Activated CD8-positive, alpha-beta T cell treated with anti-CD3 and anti-CD28 coated beads for 36 hours (primary cell): ENCODE measurements at regions of chr1 and their contacts with region 1.

Region 1: DNA sequence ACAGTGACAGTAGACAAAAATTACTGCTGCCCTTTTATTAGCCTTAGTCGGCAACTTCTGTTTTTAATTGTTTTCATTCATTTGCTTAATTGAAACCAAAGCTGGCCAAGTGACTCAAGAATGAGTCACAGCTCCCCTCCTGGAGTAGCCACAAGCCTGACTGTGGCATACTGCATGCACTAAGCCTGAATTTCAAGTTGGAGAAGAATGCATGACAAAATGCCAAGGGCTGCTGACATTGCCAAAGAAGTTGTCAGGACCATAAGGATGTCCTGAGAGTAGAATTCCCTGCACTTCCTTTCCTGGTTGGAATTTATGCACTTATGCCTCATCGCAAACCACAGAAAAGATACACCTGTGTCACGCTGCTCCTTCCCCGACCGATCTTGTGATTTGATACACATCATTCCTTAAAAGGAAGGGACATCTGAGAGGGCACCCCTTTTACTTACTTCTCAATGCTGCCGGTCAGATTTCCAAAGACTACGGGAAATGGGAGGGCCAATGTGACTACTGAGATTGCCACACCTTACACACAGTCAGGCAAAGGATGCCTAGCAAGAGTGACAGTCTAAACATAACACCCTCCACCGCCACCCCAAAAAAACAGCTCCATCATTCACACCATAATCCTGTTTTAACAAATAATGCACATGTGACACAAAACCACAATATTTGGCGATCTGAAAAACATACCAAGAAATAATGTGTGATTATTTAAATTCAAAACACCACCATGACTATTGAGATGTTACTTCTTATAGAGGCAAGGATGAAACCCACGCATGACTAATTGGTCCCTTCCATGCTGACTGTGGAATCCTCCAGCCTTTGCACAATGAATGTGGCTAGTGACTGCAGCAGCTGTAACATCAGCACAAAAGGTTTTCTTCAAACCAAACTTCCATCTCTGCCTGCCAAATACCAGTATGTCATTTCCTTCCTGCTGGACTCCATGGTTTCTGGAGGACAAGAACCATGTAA is 28.2 kb downstream of the VAV3 start:
- DNase-seq: peak; percentile 82
- ATAC-seq: peak; percentile 48
- H3K4me3 Mint-ChIP-seq: peak overlapping the region; percentile 44
- H3K27ac Mint-ChIP-seq: peak overlapping the region; percentile 70
- H3K4me1 Mint-ChIP-seq: peaks cover 86% of the 10 kb centered on the region
- H3K27me3 Mint-ChIP-seq: no peaks in the 10 kb centered on the region
- CTCF ChIP-seq: no peak

Region 2: GRCh38 chr1:107829061-107830040 is 107.4 kb before region 1 on chr1:
- CTCF ChIA-PET with region 1: no interaction called
- POLR2A ChIA-PET with region 1: no interaction called
- intact Hi-C with region 1: loop called (anchors 5 kb)
- DNase-seq: peak; percentile 14
- ATAC-seq: peak; percentile 66
- H3K4me3 Mint-ChIP-seq: no peak overlapping the region
- H3K27ac Mint-ChIP-seq: no peak overlapping the region
- H3K4me1 Mint-ChIP-seq: peaks cover 57% of the 10 kb centered on the region
- H3K27me3 Mint-ChIP-seq: no peaks in the 10 kb centered on the region
- CTCF ChIP-seq: no peak

Region 3: DNA sequence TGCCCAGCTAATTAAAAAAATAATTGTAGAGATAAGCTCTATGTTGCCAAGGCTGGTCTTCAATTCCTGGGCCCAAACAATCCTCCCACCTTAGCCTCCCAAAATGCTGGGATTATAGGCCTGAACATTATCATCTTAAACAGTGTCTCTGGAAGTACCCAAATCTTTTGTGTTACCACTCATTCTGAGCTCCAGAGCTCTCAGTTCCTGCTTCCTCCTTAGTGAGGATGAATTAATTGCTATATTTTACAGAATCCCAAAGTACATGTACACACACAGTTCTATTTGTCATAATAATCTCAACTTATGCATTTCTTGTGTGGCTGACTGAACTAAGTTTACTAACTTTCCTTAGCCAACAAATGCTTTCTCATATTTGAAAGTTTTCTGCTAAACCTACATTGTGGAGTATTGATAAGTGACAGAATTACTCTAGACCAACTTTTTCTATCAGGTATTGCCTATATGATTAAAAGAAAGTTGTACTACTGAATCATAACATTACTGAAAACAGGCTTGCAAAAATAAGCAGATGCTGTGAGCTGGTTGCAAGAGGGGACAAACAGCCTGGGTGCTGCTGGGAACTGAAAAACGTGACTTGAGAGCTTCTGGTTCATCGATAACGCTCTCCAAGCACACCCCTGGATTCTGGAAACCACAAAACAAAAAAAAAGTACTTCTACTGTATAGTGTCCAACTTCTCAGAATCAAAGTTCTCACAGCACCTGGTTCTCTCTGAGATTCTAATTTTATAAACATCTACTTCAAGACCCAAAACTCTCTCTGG is 12.9 kb after region 1 on chr1:
- CTCF ChIA-PET with region 1: interaction called, 10 read pairs
- POLR2A ChIA-PET with region 1: interaction called, 4 read pairs
- intact Hi-C with region 1: no loop called
- DNase-seq: peak; percentile 24
- ATAC-seq: peak; percentile 50
- H3K4me3 Mint-ChIP-seq: no peak overlapping the region
- H3K27ac Mint-ChIP-seq: no peak overlapping the region
- H3K4me1 Mint-ChIP-seq: peaks cover 50% of the 10 kb centered on the region
- H3K27me3 Mint-ChIP-seq: no peaks in the 10 kb centered on the region
- CTCF ChIP-seq: no peak

Region 4: GRCh38 chr1:107963601-107964335 is 27.0 kb after region 1 on chr1:
- CTCF ChIA-PET with region 1: interaction called, 7 read pairs
- POLR2A ChIA-PET with region 1: interaction called, 7 read pairs
- intact Hi-C with region 1: loop called (anchors 1 kb)
- DNase-seq: peak; percentile 70
- ATAC-seq: peak; percentile 74
- H3K4me3 Mint-ChIP-seq: peak overlapping the region; percentile 93
- H3K27ac Mint-ChIP-seq: peak overlapping the region; percentile 98
- H3K4me1 Mint-ChIP-seq: peaks cover 32% of the 10 kb centered on the region
- H3K27me3 Mint-ChIP-seq: no peaks in the 10 kb centered on the region
- CTCF ChIP-seq: no peak